Breast epithelium (tissue), 4 donors: ENCODE measurements at regions of chr22 and their contacts with region 1.

Region 1: GRCh38 chr22:49324527-49325491 is 502.9 kb downstream of the BRD1 start:
- DNase-seq: peak; percentile 4 to 27
- H3K4me3 ChIP-seq: no peak overlapping the region
- H3K27ac ChIP-seq: no peak overlapping the region
- H3K4me1 ChIP-seq: no peaks in the 10 kb centered on the region
- H3K27me3 ChIP-seq: peaks cover 0 to 64% of the 10 kb centered on the region in 2 donors
- CTCF ChIP-seq: no peak
- POLR2A ChIP-seq: no peak

Region 2: DNA sequence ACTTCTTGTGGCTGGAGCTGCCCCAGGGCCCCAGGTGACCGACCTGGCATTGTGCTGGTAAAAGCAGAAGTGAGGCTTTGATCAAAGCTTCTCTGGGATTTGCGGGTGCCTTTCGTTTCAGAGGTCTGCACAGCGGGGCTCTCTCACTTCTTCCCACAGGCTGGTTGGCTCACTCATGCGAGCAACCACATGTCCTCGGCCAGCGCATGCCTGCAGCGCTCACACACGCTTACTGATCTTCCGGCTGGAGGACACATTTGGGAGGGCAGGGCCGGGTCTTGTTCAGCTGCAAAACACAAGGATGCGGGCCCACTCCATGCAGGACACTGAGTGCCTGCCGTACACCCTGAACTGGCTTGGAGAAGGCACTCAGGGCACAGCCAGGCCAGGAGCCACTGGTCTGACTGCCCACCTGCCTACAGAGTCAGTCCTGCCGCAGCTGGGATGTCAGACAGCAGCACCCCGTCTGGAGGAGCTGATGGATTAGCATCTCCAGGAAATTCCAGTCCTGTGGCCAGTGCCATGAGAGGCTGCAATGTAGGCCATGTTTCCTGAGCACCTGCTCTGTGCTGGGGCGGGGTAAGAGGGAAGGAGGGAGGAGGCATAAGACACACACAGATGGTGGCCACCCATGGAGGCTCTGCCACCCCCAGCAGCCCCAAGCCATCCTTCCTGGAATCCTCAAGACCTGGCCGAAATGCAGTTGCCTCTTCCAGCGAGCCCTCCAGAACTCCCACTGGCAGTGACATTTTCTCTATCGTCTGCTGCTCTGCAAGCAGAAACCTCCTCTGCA is 880.3 kb before region 1 on chr22:
- intact Hi-C with region 1: loop called (anchors 5 kb)
- DNase-seq: no peak
- H3K4me3 ChIP-seq: no peak overlapping the region
- H3K27ac ChIP-seq: no peak overlapping the region
- H3K4me1 ChIP-seq: no peaks in the 10 kb centered on the region
- H3K27me3 ChIP-seq: peaks cover 0 to 57% of the 10 kb centered on the region in 2 donors
- CTCF ChIP-seq: no peak
- POLR2A ChIP-seq: no peak

Region 3: DNA sequence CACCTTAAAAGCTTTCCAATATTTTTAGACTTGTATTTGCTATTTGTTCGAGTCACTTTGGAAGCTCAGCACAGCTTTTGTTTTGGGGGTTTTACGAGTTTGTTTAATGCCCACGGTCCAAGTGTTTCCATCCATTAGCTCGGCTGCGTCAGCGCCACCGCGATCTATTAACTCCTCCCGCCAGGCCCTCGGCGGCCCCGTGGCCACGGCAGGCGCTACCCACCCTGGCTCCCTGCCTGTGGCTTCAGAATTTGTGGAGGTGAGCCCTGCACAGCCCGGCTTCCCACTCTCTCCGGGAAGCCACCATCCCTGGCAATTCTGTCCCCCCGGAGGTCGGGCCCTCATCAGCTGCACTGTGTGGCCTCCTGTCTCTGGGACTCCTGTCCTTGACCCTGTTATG is 145.6 kb before region 1 on chr22:
- intact Hi-C with region 1: no loop called
- DNase-seq: no peak
- H3K4me3 ChIP-seq: no peak overlapping the region
- H3K27ac ChIP-seq: no peak overlapping the region
- H3K4me1 ChIP-seq: no peaks in the 10 kb centered on the region
- H3K27me3 ChIP-seq: peaks cover 0 to 71% of the 10 kb centered on the region in 2 donors
- CTCF ChIP-seq: no peak
- POLR2A ChIP-seq: no peak

Region 4: DNA sequence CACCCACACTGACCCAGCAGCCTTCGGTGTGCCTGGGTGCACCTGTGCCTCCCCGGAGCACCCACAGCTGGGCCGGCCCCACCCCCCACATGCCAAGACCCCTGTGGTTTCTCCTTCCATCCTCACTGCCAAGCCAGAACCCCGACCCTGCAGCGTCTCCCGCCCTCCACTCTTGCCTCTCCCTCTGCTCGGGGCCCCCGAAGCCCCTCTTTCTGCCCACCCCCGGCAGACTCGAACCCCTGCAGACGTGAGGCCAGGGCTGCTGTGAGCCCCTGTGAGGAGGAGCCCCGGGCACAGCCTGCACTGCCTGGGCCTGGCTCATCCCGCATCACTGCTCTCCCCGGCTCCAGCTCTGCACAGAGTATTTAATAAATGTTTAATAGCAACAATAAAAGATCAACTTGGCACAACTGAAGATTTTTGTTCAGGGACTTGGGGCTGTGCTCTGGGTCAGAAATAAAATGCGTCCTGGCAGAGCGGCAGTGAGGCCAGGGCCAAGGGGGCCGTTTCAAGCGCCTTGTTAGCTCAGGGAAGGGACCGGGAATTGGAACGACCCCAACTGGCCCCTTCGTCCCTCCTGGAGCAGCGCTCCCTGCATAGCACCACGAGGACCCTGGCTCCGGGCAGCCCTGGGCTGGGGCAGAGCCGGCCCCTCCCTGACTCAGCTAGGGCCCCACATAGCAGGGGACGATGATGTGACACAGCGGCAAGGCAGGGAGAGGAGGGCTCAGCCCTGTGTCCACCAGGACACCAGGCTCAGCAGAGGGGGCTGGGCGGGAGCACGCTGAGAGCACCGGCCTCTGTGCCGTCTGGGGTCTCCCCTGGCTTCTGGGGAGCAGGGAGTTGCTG is 18.0 kb before region 1 on chr22:
- intact Hi-C with region 1: loop called (anchors 1 kb)
- DNase-seq: peak; percentile 12 to 30
- H3K4me3 ChIP-seq: no peak overlapping the region
- H3K27ac ChIP-seq: no peak overlapping the region
- H3K4me1 ChIP-seq: no peaks in the 10 kb centered on the region
- H3K27me3 ChIP-seq: peaks cover 0 to 67% of the 10 kb centered on the region in 2 donors
- CTCF ChIP-seq: no peak
- POLR2A ChIP-seq: no peak

Region 5: DNA sequence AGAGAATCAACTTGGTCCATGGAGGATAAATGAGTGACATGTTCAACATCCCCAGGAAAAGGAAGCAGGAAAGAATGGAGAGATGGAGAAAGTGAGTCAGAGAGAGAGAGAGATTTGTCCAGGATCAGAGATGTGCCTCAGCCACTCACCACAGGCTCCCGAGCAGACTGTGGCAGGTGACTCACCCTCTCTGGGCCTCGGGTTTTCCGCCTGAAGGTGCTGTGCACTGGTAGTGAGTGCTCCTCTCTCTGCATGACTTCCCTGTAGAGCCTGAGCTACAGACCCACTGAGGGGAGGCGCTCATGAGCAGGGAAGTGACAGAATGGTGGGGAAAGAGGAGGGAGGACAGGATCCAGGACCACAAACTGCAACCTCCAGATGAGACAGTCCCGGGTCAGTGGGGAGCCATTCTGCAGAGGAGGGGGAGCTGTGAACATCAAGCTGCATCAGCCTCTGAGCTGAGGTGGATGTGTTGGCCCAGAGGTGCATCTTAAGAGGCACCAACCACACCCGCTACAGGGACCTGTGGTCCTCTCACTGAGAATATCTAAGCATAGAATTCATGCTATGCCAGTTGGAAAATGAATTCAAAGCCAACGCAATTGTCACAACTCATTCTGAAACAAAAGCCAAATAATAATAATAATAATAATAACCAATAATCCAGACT is 69.4 kb after region 1 on chr22:
- intact Hi-C with region 1: no loop called
- DNase-seq: peak in 1 of 2 donors; percentile 20
- H3K4me3 ChIP-seq: no peak overlapping the region
- H3K27ac ChIP-seq: no peak overlapping the region
- H3K4me1 ChIP-seq: no peaks in the 10 kb centered on the region
- H3K27me3 ChIP-seq: peaks cover 0 to 46% of the 10 kb centered on the region in 2 donors
- CTCF ChIP-seq: no peak
- POLR2A ChIP-seq: no peak